Activated naive CD4-positive, alpha-beta T cell treated with anti-CD3 and anti-CD28 coated beads for 36 hours (primary cell): ENCODE measurements at regions of chr22 and their contacts with region 1.

Region 1: GRCh38 chr22:19629720-19630419 is 84.4 kb upstream of the SEPTIN5 start:
- DNase-seq: peak; percentile 94
- H3K4me3 Mint-ChIP-seq: no peak overlapping the region
- H3K27ac Mint-ChIP-seq: no peak overlapping the region
- H3K4me1 Mint-ChIP-seq: peaks cover 3% of the 10 kb centered on the region
- H3K27me3 Mint-ChIP-seq: no peaks in the 10 kb centered on the region

Region 2: GRCh38 chr22:19143967-19144400 is 485.9 kb before region 1 on chr22:
- CTCF ChIA-PET with region 1: no interaction called
- intact Hi-C with region 1: loop called (anchors 1 kb)
- DNase-seq: peak; percentile 50
- H3K4me3 Mint-ChIP-seq: peak overlapping the region; percentile 99
- H3K27ac Mint-ChIP-seq: peak overlapping the region; percentile 91
- H3K4me1 Mint-ChIP-seq: peaks cover 19% of the 10 kb centered on the region
- H3K27me3 Mint-ChIP-seq: peaks cover 13% of the 10 kb centered on the region

Region 3: GRCh38 chr22:19419464-19420178 is 210.2 kb before region 1 on chr22:
- CTCF ChIA-PET with region 1: no interaction called
- intact Hi-C with region 1: loop called (anchors 10 kb)
- DNase-seq: peak; percentile 71
- H3K4me3 Mint-ChIP-seq: no peak overlapping the region
- H3K27ac Mint-ChIP-seq: peak overlapping the region; percentile 81
- H3K4me1 Mint-ChIP-seq: peaks cover 56% of the 10 kb centered on the region
- H3K27me3 Mint-ChIP-seq: no peaks in the 10 kb centered on the region

Region 4: GRCh38 chr22:19524170-19525115 is 105.4 kb before region 1 on chr22 and contains the start of gene CLDN5:
- CTCF ChIA-PET with region 1: interaction called, 6 read pairs
- intact Hi-C with region 1: loop called (anchors 1 kb)
- DNase-seq: no peak
- H3K4me3 Mint-ChIP-seq: peak within 1 kb of the TSS; percentile 54
- H3K27ac Mint-ChIP-seq: no peak within 1 kb of the TSS
- H3K4me1 Mint-ChIP-seq: peaks cover 18% of the 10 kb centered on the region
- H3K27me3 Mint-ChIP-seq: peaks cover 17% of the 10 kb centered on the region
- total RNA-seq, gene CLDN5: 0.21 TPM in 1 of 2 experiments, not detected in the other

Region 5: DNA sequence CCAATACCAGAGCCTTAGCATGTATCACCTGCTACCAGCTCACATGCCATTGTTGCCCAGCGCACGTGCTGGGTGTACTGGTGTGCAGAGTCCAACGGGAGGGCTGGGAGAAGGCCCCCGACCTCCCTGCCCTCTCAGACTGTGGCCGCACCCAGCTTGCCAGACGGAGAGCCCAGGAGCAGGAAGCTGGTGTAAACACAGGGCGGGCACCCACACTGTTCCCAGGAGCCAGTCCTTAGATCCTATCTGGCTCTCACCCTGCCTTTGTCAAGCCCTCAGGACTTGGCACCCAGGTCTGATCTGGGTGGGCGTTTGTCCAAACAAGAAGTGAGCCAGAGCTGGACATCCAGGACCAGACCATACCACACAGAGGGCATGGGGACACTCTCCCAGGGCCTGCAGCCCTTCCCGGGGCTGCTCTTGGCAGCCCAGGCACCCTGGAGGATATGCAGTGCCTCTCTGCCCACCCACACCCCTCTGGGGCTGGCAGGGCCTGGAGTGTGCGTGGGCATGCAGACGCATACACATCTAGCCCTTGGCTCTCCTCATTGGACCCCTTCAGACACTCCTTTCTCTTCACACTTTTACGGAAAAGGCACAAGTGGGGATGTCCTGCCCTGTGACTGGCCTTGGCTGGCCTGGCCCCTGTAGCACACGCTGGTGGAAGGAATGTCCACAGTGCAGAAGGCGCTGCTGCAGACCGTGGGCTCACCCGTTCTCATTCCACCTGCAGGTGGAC is 85.7 kb before region 1 on chr22:
- CTCF ChIA-PET with region 1: no interaction called
- intact Hi-C with region 1: no loop called
- DNase-seq: no peak
- H3K4me3 Mint-ChIP-seq: no peak overlapping the region
- H3K27ac Mint-ChIP-seq: no peak overlapping the region
- H3K4me1 Mint-ChIP-seq: no peaks in the 10 kb centered on the region
- H3K27me3 Mint-ChIP-seq: no peaks in the 10 kb centered on the region

Region 6: GRCh38 chr22:19717691-19718455 is 88.0 kb after region 1 on chr22:
- CTCF ChIA-PET with region 1: interaction called, 3 read pairs
- intact Hi-C with region 1: loop called (anchors 1 kb)
- DNase-seq: peak; percentile 77
- H3K4me3 Mint-ChIP-seq: peak overlapping the region; percentile 70
- H3K27ac Mint-ChIP-seq: no peak overlapping the region
- H3K4me1 Mint-ChIP-seq: peaks cover 9% of the 10 kb centered on the region
- H3K27me3 Mint-ChIP-seq: peaks cover 41% of the 10 kb centered on the region

Region 7: DNA sequence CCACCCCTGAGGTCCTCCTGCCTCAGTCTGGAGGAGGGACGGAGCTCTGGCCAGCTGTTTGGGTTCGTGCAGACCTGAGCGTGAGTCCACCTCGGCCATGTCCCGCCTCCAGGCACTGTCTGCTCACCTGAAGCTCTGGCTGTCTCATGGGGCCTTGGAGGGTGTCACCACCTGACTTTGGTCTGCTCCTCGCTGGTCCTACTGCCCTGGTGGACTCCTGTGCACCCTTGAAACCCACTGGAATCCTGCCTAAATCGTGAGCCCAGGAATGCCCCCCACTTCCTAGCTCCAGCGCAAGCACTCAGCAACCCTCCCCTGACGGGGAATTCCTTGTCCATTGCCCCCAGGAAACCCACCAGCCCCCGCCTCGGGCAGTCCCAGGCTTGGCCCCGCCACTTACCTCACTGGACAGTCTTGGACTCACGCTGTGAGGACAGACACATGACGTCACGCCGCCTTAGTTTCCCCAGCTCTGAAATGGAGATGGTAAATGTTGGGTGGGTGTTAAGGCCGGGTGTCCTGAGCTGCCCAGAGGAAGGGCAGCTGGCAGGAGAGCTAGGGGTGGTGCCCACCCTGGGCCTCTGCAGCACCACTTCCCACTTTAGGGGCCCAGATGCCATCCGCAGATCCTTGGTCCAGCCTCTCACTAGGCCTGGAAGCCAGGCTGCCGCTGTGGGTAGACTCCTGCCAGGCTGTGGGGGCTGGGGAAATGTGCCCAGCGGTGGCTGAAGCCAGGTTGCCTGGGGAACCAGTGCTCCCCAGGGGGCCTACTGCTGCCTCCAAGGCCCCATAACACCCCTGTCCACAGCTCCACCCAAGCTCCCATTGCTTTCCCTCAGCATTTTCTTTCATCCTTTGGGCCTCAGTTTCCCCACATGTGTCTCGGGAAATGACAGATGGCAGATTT is 112.5 kb after region 1 on chr22:
- CTCF ChIA-PET with region 1: no interaction called
- intact Hi-C with region 1: no loop called
- DNase-seq: no peak
- H3K4me3 Mint-ChIP-seq: no peak overlapping the region
- H3K27ac Mint-ChIP-seq: no peak overlapping the region
- H3K4me1 Mint-ChIP-seq: no peaks in the 10 kb centered on the region
- H3K27me3 Mint-ChIP-seq: no peaks in the 10 kb centered on the region